Mammary epithelial cell (primary cell): ENCODE measurements at regions of chr9 and their contacts with region 1.

Region 1: DNA sequence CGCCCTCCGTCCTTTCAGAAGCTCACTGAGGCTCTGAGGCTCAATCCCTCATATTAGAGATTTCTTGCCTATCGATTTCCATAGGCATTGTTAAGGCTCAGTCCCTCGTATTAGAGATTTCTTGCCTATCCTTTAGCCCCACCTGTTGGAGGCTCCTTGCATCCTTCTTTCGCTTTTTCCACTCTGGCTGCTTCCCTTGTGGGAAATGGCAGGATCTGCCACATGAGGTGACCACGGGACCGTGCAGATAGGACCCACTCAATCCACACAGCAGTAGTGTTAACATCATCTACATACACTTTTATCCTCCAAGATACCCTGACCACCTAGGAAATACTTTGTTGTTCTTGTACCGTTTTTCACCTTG is 19.5 kb downstream of the IFT74 start:
- DNase-seq: peak; percentile 22
- H3K4me3 ChIP-seq: no peak overlapping the region
- H3K27ac ChIP-seq: no peak overlapping the region
- H3K4me1 ChIP-seq: peaks cover 11% of the 10 kb centered on the region
- H3K27me3 ChIP-seq: no peaks in the 10 kb centered on the region
- CTCF ChIP-seq: peak; percentile 36 to 55

Region 2: DNA sequence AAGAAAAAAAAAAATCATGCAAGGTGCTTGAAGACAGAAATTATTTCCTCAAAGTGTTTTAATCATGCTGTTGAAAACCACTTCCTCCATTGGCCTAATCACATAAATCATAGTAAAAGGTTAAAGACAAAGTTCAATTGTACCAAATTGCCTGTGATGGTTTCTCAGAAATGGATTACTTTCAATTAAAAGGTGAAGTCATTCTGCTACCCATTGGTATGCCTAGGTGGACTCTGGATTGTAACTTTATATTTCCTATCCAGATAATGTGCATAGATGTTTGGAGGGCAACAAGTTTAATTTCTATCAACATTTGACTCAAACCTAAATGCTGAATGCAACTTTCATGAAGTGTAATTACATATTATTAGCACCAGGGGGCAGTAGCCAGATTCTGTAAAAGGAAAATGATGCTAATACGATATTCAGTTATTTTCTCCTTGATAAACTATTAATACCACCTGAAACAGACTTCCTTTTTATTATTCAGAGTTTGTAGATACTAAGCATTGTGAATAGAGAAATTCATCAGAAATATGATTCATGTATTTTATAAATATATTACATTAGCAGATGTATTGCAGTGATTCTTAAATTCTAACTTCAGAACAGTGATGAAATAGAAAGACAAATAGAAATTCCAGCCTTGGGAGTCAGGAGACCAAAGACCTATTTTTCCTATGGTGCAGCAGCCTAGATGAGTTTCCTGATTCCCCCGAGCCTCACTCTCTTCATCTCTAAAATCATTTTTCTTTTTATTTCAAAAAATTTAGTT is 231.3 kb before region 1 on chr9:
- CTCF ChIA-PET with region 1: no interaction called
- dilution Hi-C with region 1: no loop called
- in situ Hi-C with region 1: no loop called
- intact Hi-C with region 1: loop called (anchors 5 kb)
- DNase-seq: peak; percentile 9
- H3K4me3 ChIP-seq: no peak overlapping the region
- H3K27ac ChIP-seq: no peak overlapping the region
- H3K4me1 ChIP-seq: peaks cover 3% of the 10 kb centered on the region
- H3K27me3 ChIP-seq: no peaks in the 10 kb centered on the region
- CTCF ChIP-seq: peak; percentile 61 to 66

Region 3: GRCh38 chr9:26892251-26893029 is 83.2 kb before region 1 on chr9 and contains the start of gene CAAP1:
- CTCF ChIA-PET with region 1: no interaction called
- dilution Hi-C with region 1: no loop called
- in situ Hi-C with region 1: loop called in 1 of 2 experiments (anchors 25 kb)
- intact Hi-C with region 1: no loop called
- DNase-seq: peak; percentile 85
- H3K4me3 ChIP-seq: peak within 1 kb of the TSS; percentile 94 to 99 (median 98)
- H3K27ac ChIP-seq: peak within 1 kb of the TSS; percentile 86
- H3K4me1 ChIP-seq: peaks cover 7% of the 10 kb centered on the region
- H3K27me3 ChIP-seq: no peaks in the 10 kb centered on the region
- CTCF ChIP-seq: peak; percentile 21 to 59
- total RNA-seq, gene CAAP1: 17.1 to 19.2 TPM

Region 4: GRCh38 chr9:27019589-27019988 is 43.9 kb after region 1 on chr9:
- CTCF ChIA-PET with region 1: no interaction called
- dilution Hi-C with region 1: no loop called
- in situ Hi-C with region 1: no loop called
- intact Hi-C with region 1: no loop called
- DNase-seq: no peak
- H3K4me3 ChIP-seq: no peak overlapping the region
- H3K27ac ChIP-seq: no peak overlapping the region
- H3K4me1 ChIP-seq: no peaks in the 10 kb centered on the region
- H3K27me3 ChIP-seq: no peaks in the 10 kb centered on the region
- CTCF ChIP-seq: no peak

Region 5: GRCh38 chr9:27204578-27204977 is 228.9 kb after region 1 on chr9:
- CTCF ChIA-PET with region 1: no interaction called
- dilution Hi-C with region 1: no loop called
- in situ Hi-C with region 1: no loop called
- intact Hi-C with region 1: loop called (anchors 10 kb)
- DNase-seq: peak; percentile 61
- H3K4me3 ChIP-seq: no peak overlapping the region
- H3K27ac ChIP-seq: no peak overlapping the region
- H3K4me1 ChIP-seq: peaks cover 6% of the 10 kb centered on the region
- H3K27me3 ChIP-seq: peaks cover 16% of the 10 kb centered on the region
- CTCF ChIP-seq: no peak